Sigmoid colon (tissue), 7 donors: ENCODE measurements at regions of chr22 and their contacts with region 1.

Region 1: DNA sequence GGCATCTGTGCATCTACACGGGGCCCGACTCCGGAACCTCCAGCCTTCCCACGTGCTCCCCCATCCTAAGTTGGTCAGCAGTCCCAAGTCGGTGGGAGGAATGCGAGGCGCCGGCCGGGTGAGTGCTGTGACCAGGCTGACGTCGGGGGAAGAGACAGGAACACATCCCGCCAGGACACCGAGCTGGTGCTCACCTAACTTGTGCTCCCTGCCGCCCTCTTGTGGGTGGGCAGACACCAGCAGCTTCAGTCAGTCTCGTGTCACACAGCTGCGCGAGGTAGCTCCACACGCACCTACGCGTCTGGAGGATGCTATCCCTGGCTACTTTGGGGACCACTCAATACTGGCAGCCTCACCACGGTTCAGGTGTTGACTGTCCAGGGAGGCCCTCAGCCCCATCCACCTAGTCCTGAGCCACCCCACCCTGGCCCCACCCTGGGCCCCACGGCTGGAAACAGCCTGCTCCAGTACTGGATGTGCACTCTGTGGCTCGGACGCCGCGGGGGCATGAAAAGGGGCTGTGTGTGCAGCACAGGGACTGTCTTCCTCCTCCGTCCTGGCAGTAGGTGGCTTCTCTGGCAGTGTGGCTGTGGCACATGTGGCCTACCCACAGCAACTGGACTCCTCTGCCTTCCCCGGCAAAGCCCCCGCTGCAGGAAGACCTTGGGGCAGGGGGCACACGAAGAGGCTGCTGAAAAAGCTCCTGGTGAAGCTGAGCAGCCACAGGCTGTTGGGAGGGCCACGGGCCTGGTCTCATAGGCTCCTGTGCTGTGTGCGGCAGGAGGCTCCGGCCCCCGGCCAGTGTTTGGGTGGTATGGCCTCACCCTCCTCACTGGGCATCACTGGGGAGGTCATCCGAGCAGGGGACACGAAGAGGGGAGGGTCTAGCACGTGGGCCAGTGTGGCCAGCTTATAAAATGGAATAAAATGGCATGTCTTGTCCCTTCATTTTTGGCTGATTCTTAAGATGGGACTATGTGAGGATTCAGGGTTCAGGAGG is 11.2 kb upstream of the BID start:
- DNase-seq: peak; percentile 81
- H3K4me3 ChIP-seq: no peak overlapping the region
- H3K27ac ChIP-seq: peak overlapping the region in 3 of 4 donors; percentile 25 to 66 (median 66)
- H3K4me1 ChIP-seq: peaks cover 0 to 33% (median 23%) of the 10 kb centered on the region in 4 donors
- H3K27me3 ChIP-seq: no peaks in the 10 kb centered on the region
- CTCF ChIP-seq: peak in 3 of 4 experiments; percentile 41 to 65 (median 60)
- EP300 ChIP-seq: no peak
- POLR2A ChIP-seq: no peak

Region 2: DNA sequence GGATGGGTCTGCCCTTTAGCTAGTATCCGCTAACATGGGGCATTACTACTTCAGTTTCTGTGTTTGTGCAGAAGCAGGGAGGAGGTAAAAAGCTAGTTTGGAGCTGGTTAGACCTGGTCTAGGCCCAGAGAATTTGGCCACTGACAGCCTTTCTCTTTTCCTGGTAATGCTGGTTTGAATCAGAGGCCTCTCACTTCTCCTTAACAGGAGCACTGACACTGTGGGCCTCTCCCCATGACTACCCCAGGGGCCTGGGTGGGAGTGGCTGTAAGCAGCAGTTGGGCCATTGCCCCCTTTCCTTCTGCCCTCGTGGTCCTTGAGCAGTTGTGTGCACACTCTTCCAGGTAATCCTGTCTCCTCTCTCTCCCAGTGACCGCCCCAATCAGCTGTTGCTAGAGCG is 230.7 kb before region 1 on chr22:
- intact Hi-C with region 1: loop called (anchors 5 kb)
- DNase-seq: no peak
- H3K4me3 ChIP-seq: no peak overlapping the region
- H3K27ac ChIP-seq: no peak overlapping the region
- H3K4me1 ChIP-seq: peaks cover 0 to 16% (median 3%) of the 10 kb centered on the region in 4 donors
- H3K27me3 ChIP-seq: no peaks in the 10 kb centered on the region
- CTCF ChIP-seq: no peak
- EP300 ChIP-seq: no peak
- POLR2A ChIP-seq: no peak

Region 3: GRCh38 chr22:17742527-17742902 is 43.0 kb before region 1 on chr22:
- intact Hi-C with region 1: loop called (anchors 5 kb)
- DNase-seq: peak; percentile 77
- H3K4me3 ChIP-seq: no peak overlapping the region
- H3K27ac ChIP-seq: no peak overlapping the region
- H3K4me1 ChIP-seq: peaks cover 0 to 6% (median 4%) of the 10 kb centered on the region in 4 donors
- H3K27me3 ChIP-seq: no peaks in the 10 kb centered on the region
- CTCF ChIP-seq: peak; percentile 19 to 71 (median 50)
- EP300 ChIP-seq: no peak
- POLR2A ChIP-seq: no peak